Colonic mucosa (tissue), 4 donors: ENCODE measurements at regions of chr2 and their contacts with region 1.

Region 1: GRCh38 chr2:99489761-99490622 is at the start of gene REV1:
- DNase-seq: peak; percentile 93
- H3K4me3 ChIP-seq: peak within 1 kb of the TSS; percentile 89
- H3K27ac ChIP-seq: peak within 1 kb of the TSS; percentile 92
- H3K4me1 ChIP-seq: no peaks in the 10 kb centered on the region
- H3K27me3 ChIP-seq: no peaks in the 10 kb centered on the region
- CTCF ChIP-seq: peak; percentile 67
- total RNA-seq, gene REV1: 29.7 to 37.4 TPM

Region 2: DNA sequence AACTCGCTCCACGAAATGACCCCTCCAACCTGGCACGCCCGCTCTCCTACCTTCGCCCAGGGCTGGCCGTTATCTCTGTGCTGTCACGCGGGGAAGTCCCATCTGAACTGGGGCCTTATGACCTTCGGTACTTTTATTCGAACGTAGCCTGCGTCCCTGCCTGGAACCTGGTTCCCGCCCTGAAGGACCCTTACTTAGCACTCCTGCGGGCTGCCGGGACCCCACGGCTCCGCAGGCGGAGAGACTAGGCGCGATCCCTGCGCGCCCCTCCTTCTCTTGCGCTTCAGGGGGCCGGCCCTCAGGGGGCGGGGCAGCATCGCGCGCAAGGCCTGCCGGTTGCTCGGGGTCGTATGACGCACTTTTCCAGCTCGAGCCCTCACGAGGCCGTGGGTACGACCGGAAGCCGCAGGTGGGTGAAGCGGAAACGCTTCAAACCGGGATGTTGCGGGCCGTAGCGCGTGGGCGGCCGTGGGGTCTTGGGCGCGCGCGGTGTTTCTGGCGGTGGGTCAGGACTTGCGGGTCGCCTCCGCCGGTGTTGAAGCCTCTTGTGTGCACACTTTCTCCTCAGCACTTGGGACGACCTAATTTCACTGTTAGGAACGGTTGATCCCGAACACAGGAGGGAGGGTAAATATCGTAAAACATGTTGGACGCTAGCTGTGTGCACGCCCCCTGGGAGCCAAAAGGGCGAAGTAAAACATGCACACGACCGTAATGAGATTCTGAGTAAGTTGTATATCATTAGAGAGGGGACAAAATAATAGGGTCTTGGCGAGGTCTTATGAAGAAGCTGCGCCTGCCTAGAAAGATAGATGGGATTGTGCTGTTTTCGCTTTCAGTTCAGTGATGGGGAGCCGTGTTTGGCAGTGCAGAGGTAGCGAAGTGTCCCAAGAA is 335.1 kb before region 1 on chr2 and contains the starts of genes LIPT1 and TSGA10:
- intact Hi-C with region 1: loop called (anchors 10 kb)
- DNase-seq: peak; percentile 94
- H3K4me3 ChIP-seq: peak within 1 kb of the TSS; percentile 65
- H3K27ac ChIP-seq: peak within 1 kb of the TSS; percentile 92
- H3K4me1 ChIP-seq: no peaks in the 10 kb centered on the region
- H3K27me3 ChIP-seq: no peaks in the 10 kb centered on the region
- CTCF ChIP-seq: no peak
- total RNA-seq, gene LIPT1: 6.2 to 6.3 TPM
- total RNA-seq, gene TSGA10: 6.1 to 6.6 TPM

Region 3: GRCh38 chr2:99337113-99338028 is 152.6 kb before region 1 on chr2 and contains the start of gene EIF5B:
- intact Hi-C with region 1: loop called (anchors 5 kb)
- DNase-seq: peak; percentile 97
- H3K4me3 ChIP-seq: peak within 1 kb of the TSS; percentile 95
- H3K27ac ChIP-seq: peak within 1 kb of the TSS; percentile 91
- H3K4me1 ChIP-seq: peaks cover 11% of the 10 kb centered on the region
- H3K27me3 ChIP-seq: no peaks in the 10 kb centered on the region
- CTCF ChIP-seq: peak; percentile 57
- total RNA-seq, gene EIF5B: 27.1 to 40.5 TPM

Region 4: GRCh38 chr2:99670768-99671734 is 181.1 kb after region 1 on chr2:
- intact Hi-C with region 1: no loop called
- DNase-seq: no peak
- H3K4me3 ChIP-seq: no peak overlapping the region
- H3K27ac ChIP-seq: no peak overlapping the region
- H3K4me1 ChIP-seq: no peaks in the 10 kb centered on the region
- H3K27me3 ChIP-seq: no peaks in the 10 kb centered on the region
- CTCF ChIP-seq: no peak